HEK293T (cell line): ENCODE measurements at regions of chr16 and their contacts with region 1.

Region 1: GRCh38 chr16:30370444-30371247 is at the start of gene TBC1D10B:
- DNase-seq: peak; percentile 98

Region 2: GRCh38 chr16:30355144-30355894 is 15.3 kb before region 1 on chr16 and contains the start of gene CD2BP2:
- CTCF ChIA-PET with region 1: interaction called, 10 read pairs
- POLR2A ChIA-PET with region 1: interaction called, 95 read pairs
- DNase-seq: peak; percentile 99

Region 3: GRCh38 chr16:30407102-30407803 is 36.6 kb after region 1 on chr16 and contains the start of gene ZNF771:
- CTCF ChIA-PET with region 1: interaction called, 8 read pairs
- POLR2A ChIA-PET with region 1: interaction called, 22 read pairs
- DNase-seq: peak; percentile 94

Region 4: GRCh38 chr16:30459456-30459855 is 88.8 kb after region 1 on chr16:
- CTCF ChIA-PET with region 1: no interaction called
- POLR2A ChIA-PET with region 1: no interaction called
- DNase-seq: no peak